AG04450 (cell line): ENCODE measurements at regions of chr5 and their contacts with region 1.

Region 1: GRCh38 chr5:138077065-138077696 is 6.7 kb upstream of the WNT8A start:
- DNase-seq: peak; percentile 23
- H3K4me3 ChIP-seq: no peak overlapping the region
- H3K27ac ChIP-seq: no peak overlapping the region
- H3K27me3 ChIP-seq: peaks cover 4% of the 10 kb centered on the region
- CTCF ChIP-seq: peak; percentile 93

Region 2: GRCh38 chr5:137858954-137859353 is 218.2 kb before region 1 on chr5:
- CTCF ChIA-PET with region 1: no interaction called
- POLR2A ChIA-PET with region 1: no interaction called
- DNase-seq: no peak
- H3K4me3 ChIP-seq: no peak overlapping the region
- H3K27ac ChIP-seq: no peak overlapping the region
- H3K27me3 ChIP-seq: no peaks in the 10 kb centered on the region
- CTCF ChIP-seq: no peak

Region 3: GRCh38 chr5:138065102-138065501 is 12.1 kb before region 1 on chr5:
- CTCF ChIA-PET with region 1: interaction called, 64 read pairs
- POLR2A ChIA-PET with region 1: no interaction called
- DNase-seq: no peak
- H3K4me3 ChIP-seq: no peak overlapping the region
- H3K27ac ChIP-seq: no peak overlapping the region
- H3K27me3 ChIP-seq: peaks cover 4% of the 10 kb centered on the region
- CTCF ChIP-seq: peak; percentile 33

Region 4: GRCh38 chr5:138102454-138103318 is 25.5 kb after region 1 on chr5:
- CTCF ChIA-PET with region 1: interaction called, 38 read pairs
- POLR2A ChIA-PET with region 1: no interaction called
- DNase-seq: no peak
- H3K4me3 ChIP-seq: no peak overlapping the region
- H3K27ac ChIP-seq: no peak overlapping the region
- H3K27me3 ChIP-seq: peaks cover 4% of the 10 kb centered on the region
- CTCF ChIP-seq: no peak

Region 5: GRCh38 chr5:138128334-138128733 is 51.2 kb after region 1 on chr5:
- CTCF ChIA-PET with region 1: interaction called, 158 read pairs
- POLR2A ChIA-PET with region 1: no interaction called
- DNase-seq: no peak
- H3K4me3 ChIP-seq: no peak overlapping the region
- H3K27ac ChIP-seq: no peak overlapping the region
- H3K27me3 ChIP-seq: no peaks in the 10 kb centered on the region
- CTCF ChIP-seq: no peak